Activated B cell treated with CpG ODN at 0.5 μM for 24 hours (primary cell): ENCODE measurements at regions of chr19 and their contacts with region 1.

Region 1: GRCh38 chr19:2391118-2391725 is 31.2 kb downstream of the TMPRSS9 start:
- DNase-seq: no peak
- ATAC-seq: peak; percentile 56
- H3K4me3 Mint-ChIP-seq: no peak overlapping the region
- H3K27ac Mint-ChIP-seq: peak overlapping the region; percentile 74
- H3K4me1 Mint-ChIP-seq: peaks cover 34% of the 10 kb centered on the region
- H3K27me3 Mint-ChIP-seq: no peaks in the 10 kb centered on the region
- CTCF ChIP-seq: peak; percentile 82

Region 2: DNA sequence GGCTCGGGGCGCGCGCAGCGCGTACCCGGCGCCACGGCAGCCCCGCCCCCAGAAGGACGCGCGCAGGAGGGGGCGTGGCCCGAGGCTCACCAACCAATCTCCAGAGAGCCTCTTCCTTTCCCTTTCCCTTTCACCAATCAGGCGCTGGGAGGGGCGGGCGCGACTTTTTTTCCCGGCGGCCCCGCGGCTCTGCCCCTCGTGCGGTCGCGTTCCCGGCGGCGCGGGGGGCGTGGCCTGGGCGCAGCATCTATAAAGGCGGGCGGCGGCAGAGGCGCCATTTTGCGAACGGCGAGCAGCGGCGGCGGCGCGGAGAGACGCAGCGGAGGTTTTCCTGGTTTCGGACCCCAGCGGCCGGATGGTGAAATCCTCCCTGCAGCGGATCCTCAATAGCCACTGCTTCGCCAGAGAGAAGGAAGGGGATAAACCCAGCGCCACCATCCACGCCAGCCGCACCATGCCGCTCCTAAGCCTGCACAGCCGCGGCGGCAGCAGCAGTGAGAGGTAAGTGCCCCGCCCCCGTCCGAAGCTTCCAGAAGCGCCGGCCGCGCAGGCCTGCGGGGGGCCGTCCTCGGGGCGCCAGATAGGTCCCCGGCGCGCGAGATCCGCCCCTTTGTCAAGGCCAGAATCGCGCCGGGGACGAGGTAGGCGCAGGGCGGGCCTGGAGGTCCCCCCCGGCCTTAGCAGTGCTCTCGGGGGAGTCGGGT is 121.8 kb before region 1 on chr19:
- CTCF ChIA-PET with region 1: interaction called, 4 read pairs
- POLR2A ChIA-PET with region 1: interaction called, 10 read pairs
- intact Hi-C with region 1: no loop called
- DNase-seq: peak; percentile 100
- ATAC-seq: peak; percentile 67
- H3K4me3 Mint-ChIP-seq: peak overlapping the region; percentile 92
- H3K27ac Mint-ChIP-seq: peak overlapping the region; percentile 91
- H3K4me1 Mint-ChIP-seq: peaks cover 60% of the 10 kb centered on the region
- H3K27me3 Mint-ChIP-seq: no peaks in the 10 kb centered on the region
- CTCF ChIP-seq: no peak

Region 3: DNA sequence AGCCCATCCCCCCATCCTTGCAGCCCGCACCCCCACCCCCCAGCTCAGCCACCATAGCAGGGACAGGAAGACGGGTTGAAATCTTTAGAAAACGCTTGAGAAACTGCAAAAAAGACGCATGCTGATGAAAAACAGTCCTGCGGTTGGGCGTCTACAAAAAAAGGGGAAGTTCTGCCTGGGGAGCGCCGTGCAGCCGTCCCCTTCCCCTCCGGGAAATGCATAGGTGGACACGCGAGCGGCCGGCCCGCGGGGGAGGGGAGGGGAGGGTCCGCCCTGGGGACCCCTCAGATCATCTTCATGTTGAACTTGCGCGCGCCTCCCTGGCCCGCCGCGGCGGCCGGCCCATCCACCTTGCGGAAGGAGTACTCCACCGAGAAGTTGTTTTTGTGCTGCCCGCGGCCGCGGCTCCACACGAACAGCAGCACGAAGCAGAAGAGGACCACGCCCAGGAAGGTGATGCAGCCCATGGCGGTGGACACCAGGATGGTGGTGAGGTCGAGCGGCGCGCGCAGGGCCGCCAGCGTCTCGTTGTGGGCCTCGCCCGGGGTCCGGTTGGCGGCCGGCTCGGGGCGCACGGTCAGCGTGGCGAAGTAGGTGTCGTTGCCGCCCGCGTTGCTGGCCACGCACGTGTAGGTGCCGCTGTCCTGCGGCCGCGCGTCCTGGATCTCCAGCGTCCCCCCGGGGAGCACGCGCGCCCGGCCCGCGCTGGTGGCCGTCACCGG is 101.3 kb before region 1 on chr19:
- CTCF ChIA-PET with region 1: interaction called, 3 read pairs
- POLR2A ChIA-PET with region 1: interaction called, 16 read pairs
- intact Hi-C with region 1: no loop called
- DNase-seq: peak; percentile 69
- ATAC-seq: peak; percentile 69
- H3K4me3 Mint-ChIP-seq: peak overlapping the region; percentile 90
- H3K27ac Mint-ChIP-seq: peak overlapping the region; percentile 90
- H3K4me1 Mint-ChIP-seq: peaks cover 54% of the 10 kb centered on the region
- H3K27me3 Mint-ChIP-seq: no peaks in the 10 kb centered on the region
- CTCF ChIP-seq: no peak

Region 4: GRCh38 chr19:2328401-2329148 is 62.6 kb before region 1 on chr19 and contains the starts of genes LSM7 and SPPL2B:
- CTCF ChIA-PET with region 1: no interaction called
- POLR2A ChIA-PET with region 1: interaction called, 10 read pairs
- intact Hi-C with region 1: loop called (anchors 2 kb)
- DNase-seq: peak; percentile 97
- ATAC-seq: peak; percentile 52
- H3K4me3 Mint-ChIP-seq: peak within 1 kb of the TSS; percentile 100
- H3K27ac Mint-ChIP-seq: peak within 1 kb of the TSS; percentile 99
- H3K4me1 Mint-ChIP-seq: peaks cover 86% of the 10 kb centered on the region
- H3K27me3 Mint-ChIP-seq: no peaks in the 10 kb centered on the region
- CTCF ChIP-seq: no peak
- total RNA-seq, gene LSM7: 149 and 152 TPM in 2 replicates
- total RNA-seq, gene SPPL2B: 112 and 142 TPM in 2 replicates

Region 5: DNA sequence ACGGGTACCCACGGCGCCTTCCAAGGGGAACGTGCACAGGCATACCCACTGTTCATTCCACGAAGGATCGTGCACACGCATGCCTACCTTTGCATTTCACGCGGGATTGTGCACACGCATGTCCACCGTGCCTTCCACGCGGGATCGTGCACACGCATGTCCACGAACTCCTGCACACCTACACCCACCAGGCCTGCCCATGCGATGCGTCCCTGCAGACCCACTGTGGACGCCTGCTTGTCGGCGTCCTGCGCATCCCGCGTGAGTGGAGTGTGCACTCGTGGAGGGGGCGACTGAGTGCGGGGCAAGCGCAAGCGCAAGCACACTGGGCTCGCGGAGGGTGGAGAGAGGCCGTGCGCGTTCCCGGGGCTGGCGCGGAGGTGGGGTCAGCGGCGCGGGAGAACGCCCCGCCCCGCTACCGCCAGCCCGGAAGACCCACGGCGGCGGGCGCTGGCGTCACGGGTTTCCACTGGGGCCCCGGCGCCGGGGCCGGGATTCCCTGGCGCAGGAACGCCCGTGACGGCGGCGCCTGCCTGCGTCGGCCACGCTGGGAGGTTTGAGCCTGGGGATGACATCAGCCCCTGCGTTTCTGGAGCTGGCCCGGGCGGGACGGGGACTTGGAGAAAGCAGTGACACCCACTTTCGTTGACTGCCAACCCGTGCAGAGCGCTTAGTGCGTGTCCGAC is 103.4 kb after region 1 on chr19:
- CTCF ChIA-PET with region 1: no interaction called
- POLR2A ChIA-PET with region 1: no interaction called
- intact Hi-C with region 1: no loop called
- DNase-seq: peak; percentile 54
- ATAC-seq: peak; percentile 78
- H3K4me3 Mint-ChIP-seq: peak overlapping the region; percentile 81
- H3K27ac Mint-ChIP-seq: no peak overlapping the region
- H3K4me1 Mint-ChIP-seq: peaks cover 45% of the 10 kb centered on the region
- H3K27me3 Mint-ChIP-seq: peaks cover 26% of the 10 kb centered on the region
- CTCF ChIP-seq: no peak